RWPE1 (cell line): ENCODE measurements at regions of chr12 and their contacts with region 1.

Region 1: GRCh38 chr12:90562671-90563070 is 392.3 kb downstream of the CCER1 start:
- DNase-seq: no peak
- H3K27ac ChIP-seq: no peak overlapping the region
- CTCF ChIP-seq: no peak

Region 2: GRCh38 chr12:90543841-90544240 is 18.8 kb before region 1 on chr12:
- CTCF ChIA-PET with region 1: no interaction called
- POLR2A ChIA-PET with region 1: no interaction called
- DNase-seq: no peak
- H3K27ac ChIP-seq: no peak overlapping the region
- CTCF ChIP-seq: no peak

Region 3: DNA sequence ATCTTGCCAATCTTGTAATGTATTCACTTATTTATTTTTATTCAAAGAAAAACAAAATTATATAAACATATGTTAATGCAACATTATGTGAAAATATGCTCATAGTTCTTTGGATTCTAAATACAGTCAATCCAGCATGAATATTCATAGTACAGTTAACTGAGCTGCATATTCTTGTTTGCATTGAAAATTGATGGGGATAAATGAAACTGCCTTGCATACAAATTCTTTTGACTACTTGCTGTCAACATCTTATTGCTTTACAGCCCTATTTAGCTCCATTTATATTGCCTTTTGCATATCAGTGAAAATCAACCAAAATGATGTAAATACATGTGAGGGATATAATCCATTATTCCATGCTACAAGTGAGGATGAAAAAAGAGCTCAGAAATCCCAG is 257.0 kb after region 1 on chr12:
- CTCF ChIA-PET with region 1: interaction called, 10 read pairs
- POLR2A ChIA-PET with region 1: no interaction called
- DNase-seq: no peak
- H3K27ac ChIP-seq: no peak overlapping the region
- CTCF ChIP-seq: no peak